ENCODE measurements at regions of chr5 and their contacts with region 1.

Region 1: DNA sequence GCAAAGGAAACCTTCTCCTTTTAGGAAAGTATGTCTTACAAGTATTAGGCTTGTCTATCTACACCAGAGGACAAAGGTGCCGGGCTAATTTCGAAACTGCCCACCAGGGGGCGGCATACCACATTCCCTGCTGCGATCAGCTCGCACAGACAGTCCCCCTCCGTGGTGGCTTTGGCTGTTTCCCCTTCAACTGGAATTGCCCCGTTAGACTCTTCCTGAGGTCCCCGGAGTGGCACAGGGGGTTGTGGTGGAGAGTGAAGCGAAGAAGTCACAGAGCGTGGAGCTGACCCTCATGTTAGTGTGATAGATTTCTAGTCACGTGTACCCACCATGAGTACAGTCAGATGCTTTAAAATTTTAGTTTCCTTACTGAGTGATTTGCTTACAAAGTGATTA is 17.5 kb downstream of the PTTG1 start:
- DNase-seq: peak; percentile 82 to 94 (median 93)
- ATAC-seq: peak; percentile 94 to 95
- H3K4me3 ChIP-seq: peak overlapping the region; percentile 51
- H3K27ac ChIP-seq: no peak overlapping the region
- H3K4me1 ChIP-seq: no peaks in the 10 kb centered on the region
- H3K27me3 ChIP-seq: no peaks in the 10 kb centered on the region

Region 2: GRCh38 chr5:160508780-160509361 is 69.7 kb after region 1 on chr5:
- intact Hi-C with region 1: loop called in 1 of 4 experiments (anchors 10 kb)
- DNase-seq: peak in 2 of 3 donors; percentile 37 to 63
- ATAC-seq: peak; percentile 83 to 89
- H3K4me3 ChIP-seq: no peak overlapping the region
- H3K27ac ChIP-seq: no peak overlapping the region
- H3K4me1 ChIP-seq: no peaks in the 10 kb centered on the region
- H3K27me3 ChIP-seq: no peaks in the 10 kb centered on the region